BJ (cell line): ENCODE measurements at regions of chr2 and their contacts with region 1.

Region 1: GRCh38 chr2:173021939-173022371 is 53.7 kb upstream of the MAP3K20 start:
- DNase-seq: no peak
- H3K4me3 ChIP-seq: no peak overlapping the region
- H3K27me3 ChIP-seq: no peaks in the 10 kb centered on the region
- CTCF ChIP-seq: peak; percentile 57

Region 2: DNA sequence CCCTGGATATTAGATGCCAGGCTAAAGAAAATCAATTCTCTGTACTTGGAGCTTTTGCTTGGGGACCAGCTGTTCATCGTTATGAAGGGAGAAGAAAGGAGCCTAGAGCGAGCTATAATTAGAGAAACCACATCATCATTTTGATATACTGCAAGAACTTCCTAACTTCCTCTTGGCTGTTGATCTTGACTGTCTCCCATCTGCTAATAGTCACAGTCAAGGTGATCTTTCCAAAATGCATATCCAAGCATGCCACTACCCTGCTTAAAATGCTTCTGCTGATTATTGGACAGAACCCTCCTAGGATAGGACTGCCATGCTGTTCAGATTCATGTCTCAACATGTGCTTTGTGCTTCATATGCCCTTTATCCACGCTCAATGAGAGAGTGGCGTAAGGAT is 231.6 kb before region 1 on chr2:
- CTCF ChIA-PET with region 1: no interaction called
- POLR2A ChIA-PET with region 1: no interaction called
- DNase-seq: no peak
- H3K4me3 ChIP-seq: no peak overlapping the region
- H3K27me3 ChIP-seq: peaks cover 2% of the 10 kb centered on the region; the same call in 1 of the 2 replicates
- CTCF ChIP-seq: no peak

Region 3: GRCh38 chr2:172951551-172951950 is 70.4 kb before region 1 on chr2:
- CTCF ChIA-PET with region 1: no interaction called
- POLR2A ChIA-PET with region 1: no interaction called
- DNase-seq: no peak
- H3K4me3 ChIP-seq: no peak overlapping the region
- H3K27me3 ChIP-seq: no peaks in the 10 kb centered on the region
- CTCF ChIP-seq: no peak

Region 4: GRCh38 chr2:172995323-172996244 is 26.4 kb before region 1 on chr2:
- CTCF ChIA-PET with region 1: interaction called, 5 read pairs
- POLR2A ChIA-PET with region 1: interaction called, 10 read pairs
- DNase-seq: peak; percentile 93
- H3K4me3 ChIP-seq: no peak overlapping the region
- H3K27me3 ChIP-seq: no peaks in the 10 kb centered on the region
- CTCF ChIP-seq: no peak